Panc1 (cell line): ENCODE measurements at regions of chr2 and their contacts with region 1.

Region 1: GRCh38 chr2:64330281-64331113 is 123.5 kb upstream of the LGALSL start:
- DNase-seq: peak; percentile 63
- ATAC-seq: peak; percentile 81
- H3K4me3 ChIP-seq: no peak overlapping the region
- H3K27ac ChIP-seq: no peak overlapping the region
- H3K4me1 ChIP-seq: no peaks in the 10 kb centered on the region
- H3K27me3 ChIP-seq: peaks cover 4% of the 10 kb centered on the region; the same call in 1 of the 2 replicates
- CTCF ChIP-seq: peak; percentile 89

Region 2: DNA sequence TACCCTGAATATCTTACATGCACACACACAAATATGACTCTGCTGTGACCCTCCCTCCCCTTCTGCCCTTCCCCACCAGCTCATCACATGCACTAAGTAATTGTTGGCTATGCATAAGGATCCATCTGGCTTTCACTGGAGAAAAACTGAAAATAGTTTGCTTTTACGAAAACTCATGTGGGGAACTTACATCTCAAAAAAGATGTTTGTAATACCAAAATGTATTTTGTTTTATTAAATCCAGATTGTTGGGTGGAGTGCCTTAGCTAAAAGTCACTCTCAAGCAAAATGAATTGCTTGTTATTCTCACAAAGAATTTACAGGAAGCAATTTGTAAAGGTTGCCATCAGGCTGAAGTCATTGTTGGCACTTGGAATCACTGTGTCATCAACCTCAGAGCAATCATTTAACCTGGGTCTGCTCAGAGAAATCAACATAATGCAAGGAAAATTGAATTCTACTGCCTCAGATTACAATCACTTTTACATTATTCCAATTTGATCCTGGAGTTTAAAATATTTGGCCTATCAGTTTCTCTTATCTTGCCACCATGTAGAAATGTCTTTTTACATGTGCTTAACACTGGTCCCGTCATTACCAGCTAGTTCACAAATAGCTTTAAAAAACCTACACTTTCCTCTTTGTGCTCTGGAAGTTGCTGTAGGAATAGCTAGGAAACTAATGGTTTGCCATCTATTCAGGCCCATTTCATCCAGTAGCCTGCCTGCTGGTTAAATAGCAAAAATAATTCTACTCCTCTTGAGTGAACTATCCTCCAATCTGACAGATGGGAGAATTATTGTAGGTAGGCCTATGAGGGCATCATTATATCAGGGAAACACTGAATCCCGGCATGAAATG is 1734.2 kb before region 1 on chr2:
- CTCF ChIA-PET with region 1: no interaction called
- POLR2A ChIA-PET with region 1: no interaction called
- in situ Hi-C with region 1: no loop called
- intact Hi-C with region 1: no loop called
- DNase-seq: no peak
- ATAC-seq: no peak
- H3K4me3 ChIP-seq: no peak overlapping the region
- H3K27ac ChIP-seq: no peak overlapping the region
- H3K4me1 ChIP-seq: no peaks in the 10 kb centered on the region
- H3K27me3 ChIP-seq: no peaks in the 10 kb centered on the region
- CTCF ChIP-seq: no peak

Region 3: DNA sequence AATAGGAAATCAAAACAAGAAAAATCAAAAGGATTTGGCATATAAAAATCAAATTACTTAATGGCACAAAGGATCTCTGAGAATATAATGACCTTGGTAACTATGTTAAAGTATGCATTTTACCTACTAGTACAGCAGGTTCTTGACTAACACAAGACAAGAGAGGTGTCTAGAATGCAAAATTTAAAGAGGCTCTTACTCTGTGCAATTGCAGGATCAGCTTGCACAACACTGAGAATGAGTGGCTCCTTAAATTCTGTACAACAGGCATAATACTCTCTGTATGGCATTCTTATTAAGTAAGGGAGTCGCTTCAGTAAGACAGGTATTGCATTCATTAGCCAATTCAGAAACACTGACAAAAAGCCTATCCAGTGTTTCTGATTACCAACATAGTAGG is 416.2 kb before region 1 on chr2:
- CTCF ChIA-PET with region 1: no interaction called
- POLR2A ChIA-PET with region 1: no interaction called
- in situ Hi-C with region 1: no loop called
- intact Hi-C with region 1: no loop called
- DNase-seq: no peak
- ATAC-seq: no peak
- H3K4me3 ChIP-seq: no peak overlapping the region
- H3K27ac ChIP-seq: no peak overlapping the region
- H3K4me1 ChIP-seq: no peaks in the 10 kb centered on the region
- H3K27me3 ChIP-seq: no peaks in the 10 kb centered on the region
- CTCF ChIP-seq: no peak

Region 4: GRCh38 chr2:64052468-64053241 is 277.8 kb before region 1 on chr2:
- CTCF ChIA-PET with region 1: interaction called, 29 read pairs
- POLR2A ChIA-PET with region 1: no interaction called
- in situ Hi-C with region 1: no loop called
- intact Hi-C with region 1: loop called (anchors 1 kb)
- DNase-seq: no peak
- ATAC-seq: no peak
- H3K4me3 ChIP-seq: no peak overlapping the region
- H3K27ac ChIP-seq: no peak overlapping the region
- H3K4me1 ChIP-seq: no peaks in the 10 kb centered on the region
- H3K27me3 ChIP-seq: peaks cover 14% of the 10 kb centered on the region
- CTCF ChIP-seq: no peak

Region 5: DNA sequence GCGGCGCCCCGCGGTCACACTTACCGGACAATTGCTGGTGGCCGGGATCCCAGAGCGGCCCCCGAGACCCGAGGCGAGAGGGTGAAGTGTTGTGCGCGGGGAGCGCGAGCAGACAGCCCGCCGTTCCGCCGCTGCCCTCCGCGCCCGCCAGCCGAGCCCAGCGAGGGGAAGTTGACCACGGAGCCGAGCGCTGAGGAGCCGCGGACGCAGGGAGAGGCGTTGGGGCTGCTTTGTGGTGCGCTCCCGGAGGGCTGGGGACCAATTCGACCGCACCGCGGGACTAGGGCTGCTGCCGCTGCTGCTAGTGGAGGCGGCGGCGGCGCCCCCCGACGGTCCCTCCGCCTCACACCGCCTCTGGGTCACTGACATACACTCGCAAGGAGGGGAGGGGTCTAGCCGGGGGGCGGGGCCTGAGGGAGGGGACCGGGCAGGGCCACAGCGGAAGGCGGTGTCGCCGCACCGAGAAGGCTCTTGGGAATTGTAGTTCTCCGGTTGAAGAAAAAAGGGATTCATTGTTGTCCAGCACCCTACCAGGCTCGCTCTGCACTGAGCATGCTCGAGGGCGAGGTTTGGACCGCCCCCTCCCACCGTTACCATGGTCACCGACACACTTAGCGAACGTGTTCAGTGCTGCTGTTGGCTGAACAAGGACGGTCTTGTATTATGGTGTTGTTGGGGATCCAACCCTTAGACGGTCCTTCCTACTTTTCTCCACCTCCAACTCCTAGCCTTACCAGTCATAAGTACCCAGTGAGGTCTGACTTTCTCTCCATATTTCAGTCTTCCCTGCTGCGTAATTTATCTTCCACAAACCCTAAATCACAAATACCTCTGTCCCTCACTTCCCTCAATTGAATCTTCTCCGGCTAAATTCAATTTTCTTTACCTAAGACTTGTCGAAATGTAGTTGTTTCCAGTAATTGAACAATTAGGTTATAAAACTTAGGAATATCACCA is 186.2 kb before region 1 on chr2 and contains the start of gene PELI1:
- CTCF ChIA-PET with region 1: no interaction called
- POLR2A ChIA-PET with region 1: no interaction called
- in situ Hi-C with region 1: no loop called
- intact Hi-C with region 1: no loop called
- DNase-seq: peak; percentile 79
- ATAC-seq: peak; percentile 98
- H3K4me3 ChIP-seq: peak within 1 kb of the TSS; percentile 76 to 85
- H3K27ac ChIP-seq: peak within 1 kb of the TSS; percentile 82
- H3K4me1 ChIP-seq: peaks cover 16% of the 10 kb centered on the region
- H3K27me3 ChIP-seq: no peaks in the 10 kb centered on the region; the same call in 1 of the 2 replicates
- CTCF ChIP-seq: peak; percentile 65
- total RNA-seq, gene PELI1: 6.7 TPM

Region 6: GRCh38 chr2:64488050-64488974 is 157.8 kb after region 1 on chr2:
- CTCF ChIA-PET with region 1: interaction called, 23 read pairs
- POLR2A ChIA-PET with region 1: no interaction called
- in situ Hi-C with region 1: no loop called
- intact Hi-C with region 1: loop called (anchors 1 kb)
- DNase-seq: peak; percentile 52
- ATAC-seq: peak; percentile 81
- H3K4me3 ChIP-seq: no peak overlapping the region
- H3K27ac ChIP-seq: no peak overlapping the region
- H3K4me1 ChIP-seq: no peaks in the 10 kb centered on the region
- H3K27me3 ChIP-seq: peaks cover 32% of the 10 kb centered on the region
- CTCF ChIP-seq: peak; percentile 96

Region 7: DNA sequence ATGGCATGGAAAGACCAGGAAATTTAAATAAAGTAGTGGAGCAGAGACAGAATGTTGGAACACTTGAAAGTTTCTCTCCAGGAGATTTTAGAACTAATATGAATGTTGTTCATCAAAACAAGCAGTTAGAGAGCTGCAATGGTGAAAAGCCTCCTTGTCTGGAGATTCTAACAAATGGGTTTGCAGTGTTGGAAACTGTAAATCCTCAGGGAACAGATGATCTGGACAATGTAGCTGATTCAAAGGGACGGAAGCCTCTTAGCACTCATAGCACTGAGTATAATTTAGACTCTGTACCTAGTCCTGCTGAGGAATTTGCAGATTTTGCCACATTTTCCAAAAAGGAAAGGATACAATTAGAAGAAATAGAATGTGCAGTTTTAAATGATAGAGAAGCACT is 221.4 kb after region 1 on chr2:
- CTCF ChIA-PET with region 1: interaction called, 3 read pairs
- POLR2A ChIA-PET with region 1: interaction called, 10 read pairs
- in situ Hi-C with region 1: no loop called
- intact Hi-C with region 1: no loop called
- DNase-seq: no peak
- ATAC-seq: no peak
- H3K4me3 ChIP-seq: no peak overlapping the region
- H3K27ac ChIP-seq: no peak overlapping the region
- H3K4me1 ChIP-seq: no peaks in the 10 kb centered on the region
- H3K27me3 ChIP-seq: no peaks in the 10 kb centered on the region
- CTCF ChIP-seq: no peak

Region 8: GRCh38 chr2:64562148-64562784 is 231.8 kb after region 1 on chr2:
- CTCF ChIA-PET with region 1: interaction called, 5 read pairs
- POLR2A ChIA-PET with region 1: no interaction called
- in situ Hi-C with region 1: no loop called
- intact Hi-C with region 1: loop called (anchors 2 kb)
- DNase-seq: no peak
- ATAC-seq: no peak; the same call in 1 of the 2 replicates
- H3K4me3 ChIP-seq: no peak overlapping the region
- H3K27ac ChIP-seq: no peak overlapping the region
- H3K4me1 ChIP-seq: no peaks in the 10 kb centered on the region
- H3K27me3 ChIP-seq: no peaks in the 10 kb centered on the region
- CTCF ChIP-seq: peak; percentile 29; the same call in 1 of the 2 replicates